WTC11 (cell line): ENCODE measurements at regions of chr18 and their contacts with region 1.

Region 1: DNA sequence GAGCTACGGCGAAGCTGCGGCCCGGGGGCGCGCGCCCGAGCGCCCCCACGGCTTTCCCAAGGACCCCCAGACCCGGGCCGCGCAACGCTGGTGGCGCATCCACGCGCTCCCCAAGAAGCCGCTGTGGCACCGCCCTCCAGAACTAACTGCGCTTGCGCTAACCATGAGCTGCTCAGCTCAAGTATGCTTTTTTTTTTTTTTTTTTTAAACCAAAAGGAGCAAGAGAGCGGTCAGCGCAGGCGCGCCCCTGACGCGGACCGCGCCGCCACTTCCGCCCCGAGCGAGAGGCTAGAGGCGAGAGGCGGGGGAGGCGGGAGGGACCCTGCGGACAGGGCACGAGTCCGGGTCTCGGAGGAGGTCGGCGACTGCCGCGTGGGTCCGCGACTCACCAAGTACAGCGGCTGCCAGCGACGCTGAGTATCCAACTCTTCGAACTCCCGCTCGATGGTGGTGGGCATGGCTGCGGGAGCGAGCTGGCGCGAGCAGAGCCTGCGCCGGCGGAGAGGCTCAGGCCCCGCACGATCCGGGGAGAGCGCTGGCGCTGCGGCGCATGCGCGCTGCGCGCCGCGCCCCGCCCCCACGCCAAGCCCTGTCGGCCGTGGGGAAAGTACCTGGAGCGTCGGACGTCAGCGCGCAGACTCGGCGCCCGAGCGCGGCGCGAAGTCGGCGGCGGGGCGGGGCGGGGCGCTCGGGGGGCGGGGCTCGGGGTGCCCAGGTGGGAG is at the start of gene PTPN2:
- DNase-seq: peak; percentile 80
- ATAC-seq: peak; percentile 83
- H3K4me3 Mint-ChIP-seq: peak within 1 kb of the TSS; percentile 86
- H3K27ac Mint-ChIP-seq: peak within 1 kb of the TSS; percentile 83
- H3K4me1 Mint-ChIP-seq: peaks cover 63% of the 10 kb centered on the region
- H3K27me3 Mint-ChIP-seq: peaks cover 2% of the 10 kb centered on the region; the same call in 1 of the 2 replicates
- CTCF ChIP-seq: no peak
- total RNA-seq, gene PTPN2: 37.7 to 45.3 TPM (median 43.3 TPM) in 3 replicates

Region 2: GRCh38 chr18:12777500-12777944 is 106.3 kb before region 1 on chr18:
- CTCF ChIA-PET with region 1: interaction called, 13 read pairs
- POLR2A ChIA-PET with region 1: interaction called, 20 read pairs
- DNase-seq: peak; percentile 53
- ATAC-seq: peak; percentile 74
- H3K4me3 Mint-ChIP-seq: peak overlapping the region; percentile 65
- H3K27ac Mint-ChIP-seq: no peak overlapping the region
- H3K4me1 Mint-ChIP-seq: no peaks in the 10 kb centered on the region
- H3K27me3 Mint-ChIP-seq: peaks cover 48% of the 10 kb centered on the region
- CTCF ChIP-seq: no peak